IMR-90 (cell line): ENCODE measurements at regions of chr3 and their contacts with region 1.

Region 1: DNA sequence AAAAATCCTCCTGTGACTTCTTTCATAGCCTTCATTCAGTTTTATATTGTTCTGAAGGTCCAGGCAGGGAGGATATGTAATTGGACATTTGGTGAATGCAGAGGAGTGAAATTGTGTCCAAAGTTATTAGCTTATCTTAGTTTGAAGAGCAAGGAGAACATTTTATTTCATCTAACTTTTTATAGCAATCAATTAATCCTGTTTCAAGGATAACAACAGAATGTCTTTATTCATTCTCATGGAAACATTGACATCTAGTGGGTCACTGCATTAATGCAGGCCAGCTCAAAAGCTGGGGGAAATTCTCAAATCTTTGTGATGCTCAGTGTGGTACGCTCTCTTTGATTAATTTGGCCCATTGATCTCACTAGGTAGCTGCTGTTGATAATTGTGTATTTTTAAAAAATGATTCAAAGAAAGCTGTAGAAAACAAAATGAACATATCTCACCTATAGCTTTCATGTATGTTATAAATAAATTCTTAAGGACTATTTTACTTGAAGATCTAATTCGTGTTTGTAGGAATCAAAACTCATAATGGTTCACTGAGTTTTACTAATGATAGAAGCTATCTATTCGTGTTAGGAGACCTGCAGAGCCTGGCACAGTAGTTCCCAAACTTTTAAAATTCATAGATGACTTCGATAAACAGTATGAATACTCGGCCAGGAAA is 150.8 kb upstream of the KCNMB2 start:
- DNase-seq: peak; percentile 51
- ATAC-seq: peak; percentile 63
- H3K4me3 ChIP-seq: no peak overlapping the region
- H3K27ac ChIP-seq: no peak overlapping the region; the same call in 1 of the 2 replicates
- H3K4me1 ChIP-seq: peaks cover 4% of the 10 kb centered on the region
- H3K27me3 ChIP-seq: no peaks in the 10 kb centered on the region
- CTCF ChIP-seq: peak; percentile 90
- POLR2A ChIP-seq: no peak
- RAD21 ChIP-seq: peak; percentile 96

Region 2: DNA sequence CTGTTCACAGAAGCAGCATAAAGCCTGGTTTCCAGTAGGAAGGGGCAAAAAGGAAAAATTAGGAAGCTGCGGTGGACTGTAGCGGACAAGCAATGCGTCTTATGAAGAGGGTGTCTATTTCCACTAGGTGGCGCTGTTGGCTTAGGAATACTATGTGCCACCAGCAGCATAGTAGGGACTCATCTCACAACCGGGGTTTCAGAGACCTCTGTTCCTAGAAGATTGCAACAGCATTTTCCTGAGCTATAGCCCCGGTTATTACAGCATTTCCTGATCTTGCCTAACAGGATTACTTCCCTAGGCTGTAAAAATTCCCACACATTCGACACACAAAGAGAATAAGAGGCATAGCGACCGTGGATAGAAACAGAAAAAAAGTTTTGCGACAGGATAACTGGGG is 1871.1 kb before region 1 on chr3:
- CTCF ChIA-PET with region 1: no interaction called
- POLR2A ChIA-PET with region 1: no interaction called
- dilution Hi-C with region 1: no loop called
- in situ Hi-C with region 1: no loop called
- intact Hi-C with region 1: loop called (anchors 2 kb)
- DNase-seq: peak; percentile 42
- ATAC-seq: no peak; the same call in 1 of the 2 replicates
- H3K4me3 ChIP-seq: no peak overlapping the region
- H3K27ac ChIP-seq: no peak overlapping the region
- H3K4me1 ChIP-seq: no peaks in the 10 kb centered on the region
- H3K27me3 ChIP-seq: no peaks in the 10 kb centered on the region
- CTCF ChIP-seq: peak; percentile 54
- POLR2A ChIP-seq: no peak
- RAD21 ChIP-seq: peak; percentile 66

Region 3: GRCh38 chr3:177050501-177051237 is 1334.7 kb before region 1 on chr3:
- CTCF ChIA-PET with region 1: interaction called, 7 read pairs
- POLR2A ChIA-PET with region 1: no interaction called
- dilution Hi-C with region 1: no loop called
- in situ Hi-C with region 1: loop called (anchors 10 kb)
- intact Hi-C with region 1: loop called (anchors 2 kb)
- DNase-seq: peak; percentile 64
- ATAC-seq: peak; percentile 83
- H3K4me3 ChIP-seq: no peak overlapping the region
- H3K27ac ChIP-seq: no peak overlapping the region; the same call in 1 of the 2 replicates
- H3K4me1 ChIP-seq: no peaks in the 10 kb centered on the region
- H3K27me3 ChIP-seq: no peaks in the 10 kb centered on the region
- CTCF ChIP-seq: peak; percentile 64
- POLR2A ChIP-seq: 0 out of 2 replicates have a peak, but pooled peaks have one; percentile 35
- RAD21 ChIP-seq: peak; percentile 78

Region 4: DNA sequence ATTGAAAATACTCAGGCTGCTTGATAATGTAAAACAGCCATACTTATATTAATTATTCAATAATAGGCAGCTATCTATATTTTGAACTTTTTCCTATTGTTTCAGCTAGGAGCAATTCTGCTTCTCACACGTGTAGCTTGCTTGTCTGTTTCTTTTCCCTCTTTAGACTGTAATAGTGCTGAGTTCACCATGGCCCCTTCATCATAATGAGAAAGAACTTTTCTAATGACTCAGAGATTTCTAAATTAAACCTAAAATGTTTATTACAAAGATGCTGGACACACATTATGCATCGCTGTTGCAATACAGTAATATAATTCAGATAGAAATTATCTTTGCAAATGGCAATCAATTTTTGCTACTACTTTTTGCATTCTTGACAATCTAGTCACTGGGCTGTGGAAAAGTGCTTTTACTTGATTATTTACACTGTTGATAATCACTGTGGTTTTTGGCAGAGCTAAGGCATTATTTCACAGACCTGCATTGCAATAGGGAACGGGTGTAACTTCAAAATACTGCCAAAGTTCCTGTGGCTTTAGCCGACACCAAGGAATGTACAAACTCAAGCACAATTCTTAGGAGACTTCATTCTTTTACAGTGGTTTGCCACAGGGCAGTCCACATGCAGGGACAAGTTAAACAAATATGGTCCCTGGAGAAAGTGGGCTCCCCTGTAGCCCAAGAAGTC is 907.1 kb before region 1 on chr3:
- CTCF ChIA-PET with region 1: no interaction called
- POLR2A ChIA-PET with region 1: no interaction called
- dilution Hi-C with region 1: no loop called
- in situ Hi-C with region 1: no loop called
- intact Hi-C with region 1: loop called (anchors 1 kb)
- DNase-seq: peak; percentile 100
- ATAC-seq: peak; percentile 91
- H3K4me3 ChIP-seq: no peak overlapping the region
- H3K27ac ChIP-seq: peak overlapping the region; percentile 79; the same call in 1 of the 2 replicates
- H3K4me1 ChIP-seq: peaks cover 8% of the 10 kb centered on the region
- H3K27me3 ChIP-seq: no peaks in the 10 kb centered on the region
- CTCF ChIP-seq: no peak
- POLR2A ChIP-seq: no peak
- RAD21 ChIP-seq: peak; percentile 41

Region 5: DNA sequence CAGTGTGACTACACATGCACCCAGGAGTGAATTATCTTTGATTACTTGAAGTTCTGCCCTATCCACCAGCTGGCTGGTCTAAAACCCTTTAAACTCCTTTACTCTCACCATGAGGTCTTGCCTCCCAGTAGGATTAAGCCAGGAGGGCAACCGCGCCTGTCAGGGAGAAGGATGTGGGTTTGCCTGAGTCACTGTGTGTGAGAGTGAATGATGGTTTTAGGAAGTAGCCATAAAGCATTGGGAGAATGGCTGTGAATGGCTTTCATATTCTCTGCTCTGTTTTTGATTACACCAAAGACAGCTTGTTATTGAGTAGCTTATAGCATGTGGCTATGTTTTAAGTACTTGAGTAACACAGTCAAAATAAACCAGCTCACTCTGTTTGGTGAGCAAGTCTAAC is 550.4 kb before region 1 on chr3:
- CTCF ChIA-PET with region 1: no interaction called
- POLR2A ChIA-PET with region 1: no interaction called
- dilution Hi-C with region 1: no loop called
- in situ Hi-C with region 1: no loop called
- intact Hi-C with region 1: loop called (anchors 5 kb)
- DNase-seq: peak; percentile 94
- ATAC-seq: peak; percentile 71
- H3K4me3 ChIP-seq: no peak overlapping the region
- H3K27ac ChIP-seq: peak overlapping the region; percentile 15; the same call in 1 of the 2 replicates
- H3K4me1 ChIP-seq: peaks cover 19% of the 10 kb centered on the region
- H3K27me3 ChIP-seq: no peaks in the 10 kb centered on the region
- CTCF ChIP-seq: no peak
- POLR2A ChIP-seq: no peak
- RAD21 ChIP-seq: no peak

Region 6: DNA sequence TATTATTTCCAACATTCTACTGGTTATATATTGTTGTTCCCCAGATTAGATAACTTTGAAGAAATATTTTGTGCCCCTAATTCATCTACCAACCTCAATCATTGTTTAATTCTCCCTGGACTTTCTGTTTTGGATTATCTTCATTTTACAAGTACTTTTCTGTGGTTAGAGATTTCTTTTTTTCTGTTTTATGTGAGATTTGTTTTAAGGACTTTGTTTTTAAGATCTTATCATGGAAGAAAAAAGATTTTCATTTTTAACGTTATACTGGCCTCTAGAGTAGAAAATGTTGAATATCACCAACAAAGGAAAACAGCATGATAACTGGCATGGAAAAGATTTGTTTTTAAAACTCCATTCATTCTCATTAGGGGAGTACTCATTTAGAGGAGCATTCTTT is 60.1 kb before region 1 on chr3:
- CTCF ChIA-PET with region 1: interaction called, 4 read pairs
- POLR2A ChIA-PET with region 1: no interaction called
- dilution Hi-C with region 1: no loop called
- in situ Hi-C with region 1: no loop called
- intact Hi-C with region 1: loop called (anchors 1 kb)
- DNase-seq: peak; percentile 64
- ATAC-seq: peak; percentile 68
- H3K4me3 ChIP-seq: no peak overlapping the region
- H3K27ac ChIP-seq: no peak overlapping the region
- H3K4me1 ChIP-seq: peaks cover 9% of the 10 kb centered on the region
- H3K27me3 ChIP-seq: no peaks in the 10 kb centered on the region
- CTCF ChIP-seq: peak; percentile 64
- POLR2A ChIP-seq: no peak
- RAD21 ChIP-seq: peak; percentile 64

Region 7: DNA sequence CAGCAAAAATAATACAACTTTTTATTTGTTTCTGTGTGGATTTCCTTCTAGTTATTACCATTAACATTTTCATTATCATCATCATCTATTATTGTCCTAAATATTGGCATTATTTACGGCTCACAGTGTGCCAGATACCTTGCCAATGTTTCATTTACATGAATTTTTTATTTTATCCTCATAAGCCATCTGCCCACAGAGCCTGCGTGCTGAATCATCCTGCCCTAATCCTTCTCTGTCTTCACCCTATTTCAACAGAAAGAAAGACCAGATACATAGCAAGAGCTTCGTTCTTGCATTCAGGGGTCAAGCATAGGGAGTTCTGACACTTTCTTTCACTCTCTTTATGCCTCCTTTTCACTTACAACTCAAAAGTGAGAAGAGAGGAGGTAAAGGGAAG is 232.8 kb after region 1 on chr3:
- CTCF ChIA-PET with region 1: no interaction called
- POLR2A ChIA-PET with region 1: no interaction called
- dilution Hi-C with region 1: no loop called
- in situ Hi-C with region 1: no loop called
- intact Hi-C with region 1: no loop called
- DNase-seq: peak; percentile 1
- ATAC-seq: peak; percentile 49
- H3K4me3 ChIP-seq: peak overlapping the region; percentile 21; the same call in 1 of the 2 replicates
- H3K27ac ChIP-seq: no peak overlapping the region
- H3K4me1 ChIP-seq: no peaks in the 10 kb centered on the region
- H3K27me3 ChIP-seq: no peaks in the 10 kb centered on the region
- CTCF ChIP-seq: no peak
- POLR2A ChIP-seq: no peak
- RAD21 ChIP-seq: no peak